Activated CD4-positive, alpha-beta T cell treated with anti-CD3 and anti-CD28 coated beads, Interleukin-2, amount 10 ng/mL, durations not matched to agents 24 days and 14 days (primary cell): ENCODE measurements at regions of chr19 and their contacts with region 1.

Region 1: DNA sequence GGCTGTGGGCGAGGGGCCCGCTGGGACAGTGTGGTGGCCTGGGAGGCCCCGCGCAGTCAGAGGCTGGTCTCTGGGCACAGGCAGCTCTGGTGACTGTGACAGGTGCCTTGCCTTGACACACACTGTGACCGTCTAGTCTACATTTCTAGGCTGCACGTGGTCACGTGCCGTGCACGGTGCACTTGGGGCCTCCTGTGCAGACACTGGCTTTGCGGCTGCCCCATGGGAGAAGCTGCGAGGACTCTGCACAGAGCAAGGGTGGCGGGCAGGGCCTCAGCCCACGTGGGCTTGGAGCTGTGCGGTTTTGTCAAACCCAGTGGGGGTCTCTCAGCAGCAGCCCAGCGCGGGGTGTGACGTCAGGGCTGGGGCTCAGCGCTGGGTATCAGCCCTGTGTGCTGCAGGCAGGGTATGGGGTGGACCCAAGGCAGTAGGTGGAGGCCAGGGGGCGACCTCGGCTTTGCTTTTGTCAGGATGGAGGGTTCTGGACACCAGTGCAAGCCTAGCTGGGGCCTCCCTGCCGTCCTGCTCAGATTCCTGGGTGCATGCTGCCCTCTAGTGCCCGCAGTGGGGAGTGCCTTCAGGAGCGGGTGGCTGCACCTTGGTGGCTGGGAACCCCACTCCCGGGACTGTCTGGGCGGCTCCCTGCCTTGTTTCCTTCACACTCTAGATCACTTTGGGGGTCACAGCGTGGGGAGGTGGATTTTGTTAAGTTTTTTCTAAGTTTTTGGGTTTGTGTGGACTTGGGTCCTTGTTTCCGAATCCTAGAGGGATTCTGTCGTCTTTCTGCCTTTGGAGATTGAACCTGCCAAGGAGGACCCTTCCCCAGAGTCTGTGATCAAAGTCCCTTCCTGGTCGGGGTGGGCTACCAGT is 62.6 kb downstream of the KDM4B start:
- DNase-seq: peak; percentile 95
- H3K4me3 Mint-ChIP-seq: no peak overlapping the region
- H3K27ac Mint-ChIP-seq: no peak overlapping the region
- H3K4me1 Mint-ChIP-seq: no peaks in the 10 kb centered on the region
- H3K27me3 Mint-ChIP-seq: no peaks in the 10 kb centered on the region

Region 2: DNA sequence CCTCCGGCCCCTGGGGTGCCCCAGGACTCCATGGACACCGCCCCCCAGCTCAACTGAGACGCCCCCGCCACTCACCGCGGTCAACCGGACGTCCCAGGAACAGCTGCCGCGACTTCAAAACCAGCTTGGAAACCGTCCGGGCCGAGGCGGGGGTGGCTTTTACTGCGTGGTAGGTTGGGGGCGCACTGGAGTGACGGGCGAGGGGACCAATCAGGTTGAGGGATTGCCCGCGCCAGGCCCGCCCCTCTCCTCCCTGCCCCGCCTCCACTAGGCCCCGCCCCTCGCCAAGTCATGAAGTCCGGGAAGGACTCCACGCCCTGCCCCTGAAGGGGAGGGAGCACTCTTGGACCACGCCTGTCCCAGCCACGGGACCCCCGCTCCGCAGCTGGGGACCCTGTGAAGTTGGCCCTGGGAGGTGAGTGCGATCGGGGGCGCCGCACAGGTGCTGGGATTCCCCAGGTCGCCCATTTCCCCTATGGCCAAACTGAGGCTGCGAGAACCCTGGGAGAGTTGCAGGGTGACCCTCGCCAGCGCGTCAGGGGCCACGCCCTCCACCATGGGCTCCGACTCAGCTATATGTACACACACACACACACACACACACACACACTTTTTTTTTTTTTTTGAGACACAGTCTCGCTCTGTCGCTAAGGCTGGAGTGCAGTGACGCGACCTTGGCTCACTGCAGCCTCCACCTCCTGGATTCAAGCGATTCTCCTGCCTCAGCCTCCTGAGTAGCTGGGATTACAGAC is 163.8 kb before region 1 on chr19 and contains the start of gene PLIN3:
- intact Hi-C with region 1: loop called (anchors 1 kb)
- DNase-seq: peak; percentile 97
- H3K4me3 Mint-ChIP-seq: peak within 1 kb of the TSS; percentile 85
- H3K27ac Mint-ChIP-seq: peak within 1 kb of the TSS; percentile 83
- H3K4me1 Mint-ChIP-seq: peaks cover 27% of the 10 kb centered on the region
- H3K27me3 Mint-ChIP-seq: no peaks in the 10 kb centered on the region
- total RNA-seq, gene PLIN3: 28.6 and 34.4 TPM in 2 replicates

Region 3: DNA sequence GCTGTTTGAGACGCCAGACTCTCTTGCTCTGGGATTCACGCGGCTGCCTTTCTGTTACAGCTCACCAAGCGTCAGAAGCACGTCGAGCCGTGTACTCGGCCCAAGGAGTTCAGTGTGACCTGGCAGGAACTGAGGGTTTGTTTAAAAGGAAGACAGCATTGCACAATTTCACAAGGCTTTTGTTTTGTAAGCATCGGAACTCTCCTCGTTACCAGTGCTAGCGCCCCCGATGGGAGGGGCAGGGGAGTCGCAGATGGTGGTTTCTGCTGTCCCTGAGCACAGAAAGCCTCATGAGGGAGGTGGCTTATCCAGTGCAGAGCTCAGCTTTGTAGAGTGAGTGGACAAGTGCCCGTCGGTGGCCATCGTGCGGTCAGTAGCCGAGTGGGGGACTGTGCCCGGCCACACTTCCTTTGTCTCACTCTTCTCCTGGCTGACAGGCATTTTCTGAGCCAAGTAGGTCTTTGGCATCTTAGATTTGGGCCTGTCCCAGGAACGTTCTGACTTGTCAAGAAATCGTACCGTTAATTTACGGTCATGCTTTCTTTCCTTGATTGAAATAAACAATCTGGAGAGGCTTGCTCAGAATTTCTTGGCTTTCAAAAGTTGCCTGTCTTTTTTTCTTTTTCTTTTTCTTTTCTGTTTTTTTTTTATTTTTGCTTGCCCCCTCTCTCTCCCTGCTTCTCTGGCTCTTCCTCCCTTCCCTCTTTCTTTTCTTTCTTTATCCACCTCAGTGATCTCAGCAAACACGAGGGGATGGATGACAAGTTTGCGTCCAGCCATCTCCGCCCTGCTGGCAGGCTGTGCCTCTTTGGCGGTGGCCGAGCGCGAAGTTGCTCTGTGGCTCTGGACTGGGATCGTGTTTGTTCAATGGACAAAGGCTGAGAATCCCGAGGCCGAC is 54.8 kb before region 1 on chr19:
- intact Hi-C with region 1: loop called (anchors 10 kb)
- DNase-seq: no peak
- H3K4me3 Mint-ChIP-seq: no peak overlapping the region
- H3K27ac Mint-ChIP-seq: no peak overlapping the region
- H3K4me1 Mint-ChIP-seq: peaks cover 15% of the 10 kb centered on the region
- H3K27me3 Mint-ChIP-seq: no peaks in the 10 kb centered on the region

Region 4: GRCh38 chr19:5001615-5002014 is 29.9 kb before region 1 on chr19:
- intact Hi-C with region 1: loop called (anchors 2 kb)
- DNase-seq: peak; percentile 75
- H3K4me3 Mint-ChIP-seq: no peak overlapping the region
- H3K27ac Mint-ChIP-seq: no peak overlapping the region
- H3K4me1 Mint-ChIP-seq: peaks cover 14% of the 10 kb centered on the region
- H3K27me3 Mint-ChIP-seq: no peaks in the 10 kb centered on the region

Region 5: GRCh38 chr19:5577785-5578493 is 546.5 kb after region 1 on chr19:
- intact Hi-C with region 1: loop called (anchors 10 kb)
- DNase-seq: peak; percentile 91
- H3K4me3 Mint-ChIP-seq: no peak overlapping the region
- H3K27ac Mint-ChIP-seq: no peak overlapping the region
- H3K4me1 Mint-ChIP-seq: peaks cover 7% of the 10 kb centered on the region
- H3K27me3 Mint-ChIP-seq: no peaks in the 10 kb centered on the region